ENCODE measurements at regions of chr1 and their contacts with region 1.

Region 1: DNA sequence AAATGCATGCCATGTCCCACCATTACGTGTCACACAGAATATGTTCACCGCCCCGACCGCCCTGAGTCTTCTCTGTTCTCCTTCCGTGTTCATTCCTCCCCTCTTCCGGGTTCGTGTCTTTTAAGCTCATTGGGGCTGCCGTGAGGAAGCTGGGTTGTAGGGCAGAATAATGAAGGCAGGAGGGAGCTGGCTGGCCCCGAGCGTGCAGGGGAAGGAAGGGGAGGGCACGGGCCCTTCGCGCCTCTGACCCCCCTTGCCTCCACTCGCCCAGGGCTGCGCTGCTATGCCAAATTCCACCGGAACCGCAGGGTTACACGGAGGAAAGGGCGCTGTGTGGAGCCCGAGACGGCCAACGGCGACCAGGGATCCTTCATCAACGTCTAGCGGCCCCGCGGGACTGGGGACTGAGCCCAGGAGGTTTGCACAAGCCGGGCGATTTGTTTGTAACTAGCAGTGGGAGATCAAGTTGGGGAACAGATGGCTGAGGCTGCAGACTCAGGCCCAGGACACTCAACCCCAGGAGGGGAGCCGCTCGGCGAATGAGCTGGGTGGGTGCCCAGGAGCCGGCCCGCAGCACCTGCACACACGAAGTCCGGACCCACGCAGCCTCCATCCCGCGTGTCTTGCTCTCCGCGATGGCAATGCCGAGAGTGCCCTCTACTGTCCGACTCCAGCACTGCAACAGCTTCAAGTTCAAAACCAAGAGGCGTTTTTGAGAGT is 16.5 kb upstream of the AGTRAP start:
- DNase-seq: peak; percentile 76
- H3K4me3 ChIP-seq: peak overlapping the region in 2 of 3 experiments; percentile 4 to 34
- H3K27ac ChIP-seq: no peak overlapping the region
- H3K4me1 ChIP-seq: peaks cover 4% of the 10 kb centered on the region
- H3K27me3 ChIP-seq: peaks cover 0 to 4% of the 10 kb centered on the region in 2 experiments
- CTCF ChIP-seq: peak; percentile 88 to 91
- POLR2A ChIP-seq: no peak

Region 2: GRCh38 chr1:11661103-11661502 is 58.4 kb before region 1 on chr1:
- CTCF ChIA-PET with region 1: interaction called, 170 read pairs
- POLR2A ChIA-PET with region 1: interaction called, 5 read pairs
- dilution Hi-C with region 1: no loop called
- intact Hi-C with region 1: loop called (anchors 1 kb)
- DNase-seq: no peak
- H3K4me3 ChIP-seq: no peak overlapping the region
- H3K27ac ChIP-seq: no peak overlapping the region
- H3K4me1 ChIP-seq: no peaks in the 10 kb centered on the region
- H3K27me3 ChIP-seq: no peaks in the 10 kb centered on the region
- CTCF ChIP-seq: no peak
- POLR2A ChIP-seq: no peak

Region 3: GRCh38 chr1:11874258-11874562 is 154.7 kb after region 1 on chr1:
- CTCF ChIA-PET with region 1: no interaction called
- POLR2A ChIA-PET with region 1: no interaction called
- dilution Hi-C with region 1: no loop called
- intact Hi-C with region 1: no loop called
- DNase-seq: no peak
- H3K4me3 ChIP-seq: no peak overlapping the region
- H3K27ac ChIP-seq: no peak overlapping the region
- H3K4me1 ChIP-seq: no peaks in the 10 kb centered on the region
- H3K27me3 ChIP-seq: no peaks in the 10 kb centered on the region
- CTCF ChIP-seq: no peak
- POLR2A ChIP-seq: no peak

Measured in endothelial cell of umbilical vein (primary cell).